ENCODE measurements at regions of chr11 and their contacts with region 1.

Region 1: GRCh38 chr11:33987975-33988580 is 63.5 kb upstream of the CAPRIN1 start:
- DNase-seq: peak in 1 of 2 experiments; percentile 80
- H3K4me3 ChIP-seq: no peak overlapping the region
- H3K27ac ChIP-seq: no peak overlapping the region
- H3K4me1 ChIP-seq: no peaks in the 10 kb centered on the region
- H3K27me3 ChIP-seq: no peaks in the 10 kb centered on the region
- CTCF ChIP-seq: peak; percentile 79 to 94 (median 91)
- EP300 ChIP-seq: no peak
- POLR2A ChIP-seq: no peak
- RAD21 ChIP-seq: peak; percentile 82 to 91

Region 2: DNA sequence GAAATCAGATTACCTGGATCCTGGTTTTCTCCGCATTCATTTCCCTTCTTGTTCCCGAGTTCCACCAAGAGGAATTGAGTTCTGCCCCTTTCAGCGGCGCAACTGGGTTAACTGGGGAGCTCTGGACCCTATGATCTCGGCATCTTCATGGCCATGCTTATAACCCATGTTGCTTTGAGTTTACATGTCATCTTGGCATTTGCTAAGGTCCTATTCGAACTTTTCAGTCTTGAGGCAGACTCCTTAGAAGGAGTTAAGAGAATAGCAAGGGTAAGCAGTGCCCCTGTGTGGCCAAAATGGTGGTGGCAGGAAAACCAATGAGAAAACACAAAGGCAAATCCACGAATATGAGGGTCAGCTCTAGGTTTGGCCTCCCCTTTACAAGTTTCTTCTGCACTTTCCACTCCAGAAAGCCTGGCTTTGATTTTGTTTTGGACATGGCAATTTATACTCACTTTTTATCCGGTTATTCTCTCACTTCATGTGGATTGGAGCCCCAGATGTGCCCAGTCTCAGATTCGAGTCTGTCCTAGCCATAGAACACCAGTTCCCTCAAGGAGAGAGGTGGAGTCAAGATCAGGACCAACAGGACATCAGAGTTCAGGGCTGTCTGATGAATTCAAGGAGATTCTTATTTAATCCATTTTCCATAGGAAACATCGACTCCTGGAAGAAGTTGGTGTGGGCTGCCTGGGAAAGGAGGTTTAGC is 158.5 kb before region 1 on chr11:
- CTCF ChIA-PET with region 1: interaction called, 18 read pairs
- POLR2A ChIA-PET with region 1: no interaction called
- DNase-seq: peak in 1 of 2 experiments; percentile 79
- H3K4me3 ChIP-seq: peak overlapping the region; percentile 39 to 70 (median 49)
- H3K27ac ChIP-seq: no peak overlapping the region
- H3K4me1 ChIP-seq: peaks cover 0 to 4% (median 2%) of the 10 kb centered on the region in 4 experiments; a peak in 1 of 7 replicates
- H3K27me3 ChIP-seq: peaks cover 4 to 23% (median 13%) of the 10 kb centered on the region in 4 experiments
- CTCF ChIP-seq: peak; percentile 33 to 86 (median 76)
- EP300 ChIP-seq: no peak
- POLR2A ChIP-seq: no peak
- RAD21 ChIP-seq: peak; percentile 90 to 92

Region 3: DNA sequence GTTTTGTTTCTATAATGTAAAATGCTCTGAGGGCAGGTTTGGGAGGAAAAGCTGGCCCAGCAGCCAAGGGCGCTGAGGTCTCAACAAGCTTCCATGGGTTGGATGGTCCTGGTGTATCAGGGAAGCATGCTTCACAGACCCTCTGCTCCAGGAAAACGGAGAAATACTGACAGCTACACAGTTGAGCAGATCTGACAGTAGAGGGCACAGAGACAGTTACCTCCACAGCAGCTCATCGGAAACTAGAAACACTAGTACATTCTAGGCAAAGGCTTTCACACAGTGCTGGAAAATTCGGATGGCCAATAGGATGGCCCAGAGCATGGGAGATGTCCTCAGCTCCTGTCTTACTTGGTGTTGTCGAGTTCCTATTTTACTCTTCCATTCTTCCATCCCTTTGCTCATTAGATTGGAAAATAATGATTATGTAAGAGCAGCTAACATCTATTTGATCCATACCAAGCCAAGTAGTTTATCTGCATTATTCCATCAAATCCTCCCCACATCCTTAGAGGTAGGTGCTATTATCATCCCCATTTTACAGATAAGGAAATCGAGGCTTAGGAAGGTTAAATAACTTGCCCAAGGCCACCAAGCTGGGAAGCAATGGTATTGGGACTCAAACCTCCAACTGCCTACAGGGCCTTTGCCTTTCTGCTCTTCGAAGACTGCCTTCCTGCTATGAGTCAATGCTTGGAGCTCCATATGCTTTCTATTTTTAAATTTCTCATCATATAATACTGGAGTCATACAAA is 124.5 kb before region 1 on chr11:
- CTCF ChIA-PET with region 1: interaction called, 326 read pairs
- POLR2A ChIA-PET with region 1: interaction called, 3 read pairs
- DNase-seq: no peak
- H3K4me3 ChIP-seq: no peak overlapping the region
- H3K27ac ChIP-seq: no peak overlapping the region
- H3K4me1 ChIP-seq: peaks cover 0 to 4% (median under 1%) of the 10 kb centered on the region in 4 experiments; a peak in 3 of 7 replicates
- H3K27me3 ChIP-seq: peaks cover 16 to 22% (median 19%) of the 10 kb centered on the region in 4 experiments
- CTCF ChIP-seq: peak in 1 of 3 experiments; percentile 7; a peak in 1 of 4 replicates
- EP300 ChIP-seq: no peak
- POLR2A ChIP-seq: no peak
- RAD21 ChIP-seq: no peak

Region 4: DNA sequence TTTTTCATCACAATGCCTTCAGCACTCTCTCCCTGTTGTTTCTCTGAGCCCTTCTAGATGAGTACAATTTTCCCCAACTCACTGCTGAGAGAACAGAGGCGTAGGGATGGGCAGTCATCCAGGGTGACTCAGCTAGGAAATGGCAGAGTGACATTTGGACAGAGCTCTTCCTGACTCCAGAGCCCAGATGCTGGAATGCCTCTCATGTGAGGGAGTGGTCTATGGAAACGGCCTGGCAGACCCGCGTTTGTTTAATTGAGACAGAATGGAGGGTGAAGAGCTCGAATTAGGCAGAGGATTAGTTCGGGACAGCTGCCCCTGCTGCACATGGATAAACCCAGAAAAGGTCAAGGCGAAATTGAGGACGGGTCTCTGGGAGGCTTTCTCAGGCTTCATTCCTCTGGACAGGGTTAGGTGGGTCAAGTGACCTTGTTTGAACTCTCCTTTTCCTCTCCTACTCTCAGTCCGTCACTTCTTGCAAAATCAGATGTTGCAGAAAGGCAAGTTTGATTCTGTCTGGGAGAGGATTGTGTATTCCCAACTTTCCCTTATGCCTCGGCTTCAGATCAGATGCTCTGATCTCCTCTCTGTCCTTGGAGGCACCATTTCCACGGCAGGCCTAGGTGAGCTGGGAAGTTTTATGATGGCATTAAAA is 88.6 kb before region 1 on chr11:
- CTCF ChIA-PET with region 1: no interaction called
- POLR2A ChIA-PET with region 1: no interaction called
- DNase-seq: no peak
- H3K4me3 ChIP-seq: no peak overlapping the region
- H3K27ac ChIP-seq: no peak overlapping the region
- H3K4me1 ChIP-seq: 0 out of 7 replicates have a peak, but pooled peaks cover 0 to 2% (median 0%) of the 10 kb centered on the region in 4 experiments
- H3K27me3 ChIP-seq: no peaks in the 10 kb centered on the region
- CTCF ChIP-seq: no peak
- EP300 ChIP-seq: no peak
- POLR2A ChIP-seq: no peak
- RAD21 ChIP-seq: no peak

Region 5: GRCh38 chr11:33912405-33913361 is 75.4 kb before region 1 on chr11:
- CTCF ChIA-PET with region 1: interaction called, 14 read pairs
- POLR2A ChIA-PET with region 1: no interaction called
- DNase-seq: no peak
- H3K4me3 ChIP-seq: no peak overlapping the region
- H3K27ac ChIP-seq: no peak overlapping the region
- H3K4me1 ChIP-seq: peaks cover 0 to 5% (median 0%) of the 10 kb centered on the region in 4 experiments; a peak in 1 of 7 replicates
- H3K27me3 ChIP-seq: no peaks in the 10 kb centered on the region
- CTCF ChIP-seq: no peak
- EP300 ChIP-seq: no peak
- POLR2A ChIP-seq: no peak
- RAD21 ChIP-seq: no peak

Region 6: DNA sequence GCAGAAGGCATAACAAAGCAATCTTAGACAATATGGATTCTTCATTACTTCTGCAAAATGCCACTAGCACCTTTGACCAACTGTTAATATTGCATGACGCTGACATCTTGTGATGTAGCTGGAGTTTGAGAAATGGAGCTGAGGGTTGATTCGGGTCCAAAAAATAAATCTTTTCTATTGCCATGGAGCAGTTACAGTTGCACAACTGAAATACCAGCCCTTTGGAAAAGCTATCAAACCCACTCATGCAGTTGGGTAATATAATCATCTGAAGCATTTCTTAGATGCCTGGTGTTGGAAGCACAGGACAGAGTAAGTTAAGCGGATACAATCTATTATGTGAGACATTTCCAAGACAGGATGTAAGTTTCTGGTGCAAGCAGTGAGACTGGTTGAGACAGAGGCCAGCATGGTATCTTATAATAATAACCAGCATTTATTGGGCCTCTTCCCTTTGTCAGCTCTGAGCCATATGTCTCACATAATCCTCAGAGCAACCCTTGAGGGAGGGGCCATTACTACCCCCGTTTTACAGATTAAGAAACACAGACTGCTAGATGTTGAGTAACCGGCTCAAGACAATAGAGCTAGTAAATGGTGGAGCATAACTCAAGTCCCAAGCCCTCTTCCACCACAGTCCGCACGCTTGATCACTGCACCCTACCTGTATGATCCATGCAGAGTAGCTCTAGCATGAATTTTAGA is 11.4 kb before region 1 on chr11:
- CTCF ChIA-PET with region 1: interaction called, 51 read pairs
- POLR2A ChIA-PET with region 1: no interaction called
- DNase-seq: no peak
- H3K4me3 ChIP-seq: no peak overlapping the region
- H3K27ac ChIP-seq: no peak overlapping the region
- H3K4me1 ChIP-seq: no peaks in the 10 kb centered on the region
- H3K27me3 ChIP-seq: no peaks in the 10 kb centered on the region
- CTCF ChIP-seq: no peak
- EP300 ChIP-seq: no peak
- POLR2A ChIP-seq: no peak
- RAD21 ChIP-seq: no peak